GM18951 (cell line): ENCODE measurements at regions of chr16 and their contacts with region 1.

Region 1: GRCh38 chr16:74718741-74719610 is 18.3 kb upstream of the MLKL start:
- POLR2A ChIP-seq: no peak

Region 2: GRCh38 chr16:74874912-74875546 is 156.1 kb after region 1 on chr16:
- in situ Hi-C with region 1: loop called (anchors 10 kb)
- POLR2A ChIP-seq: no peak